ENCODE measurements at regions of chr17 and their contacts with region 1.

Region 1: GRCh38 chr17:18855831-18856569 is 1.9 kb upstream of the PRPSAP2 start:
- DNase-seq: peak; percentile 74 to 94 (median 82)
- ATAC-seq: peak; percentile 88
- H3K4me3 ChIP-seq: peak overlapping the region; percentile 80
- H3K4me3 Mint-ChIP-seq: peak overlapping the region; percentile 95
- H3K27ac ChIP-seq: peak overlapping the region; percentile 41 to 53
- H3K27ac Mint-ChIP-seq: peak overlapping the region; percentile 89
- H3K4me1 ChIP-seq: peaks cover 52% of the 10 kb centered on the region
- H3K4me1 Mint-ChIP-seq: peaks cover 49% of the 10 kb centered on the region
- H3K27me3 ChIP-seq: no peaks in the 10 kb centered on the region
- H3K27me3 Mint-ChIP-seq: no peaks in the 10 kb centered on the region
- CTCF ChIP-seq: no peak

Region 2: DNA sequence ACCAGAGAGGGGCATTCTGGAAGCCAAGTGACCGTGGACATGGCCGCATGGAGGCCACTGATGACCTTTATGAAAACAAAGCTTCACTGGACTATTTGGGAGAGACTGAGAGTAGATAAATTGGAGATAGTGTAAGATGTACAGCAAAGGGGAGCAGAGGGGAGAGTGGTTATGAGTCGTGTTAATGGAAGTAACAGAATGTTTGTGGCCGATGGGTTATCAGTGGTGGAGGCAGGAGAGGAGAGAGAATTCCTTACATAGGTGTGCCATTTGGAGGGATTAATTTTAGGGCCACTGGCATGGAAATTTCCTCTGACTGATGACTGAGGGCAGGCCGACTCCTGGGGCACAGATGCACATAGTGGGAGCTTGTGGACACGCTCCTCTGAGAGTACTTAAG is 21.1 kb after region 1 on chr17:
- CTCF ChIA-PET with region 1: no interaction called
- POLR2A ChIA-PET with region 1: no interaction called
- intact Hi-C with region 1: no loop called
- DNase-seq: no peak
- ATAC-seq: no peak
- H3K4me3 ChIP-seq: no peak overlapping the region
- H3K4me3 Mint-ChIP-seq: no peak overlapping the region
- H3K27ac ChIP-seq: no peak overlapping the region
- H3K27ac Mint-ChIP-seq: peak overlapping the region; percentile 40
- H3K4me1 ChIP-seq: no peaks in the 10 kb centered on the region
- H3K4me1 Mint-ChIP-seq: peaks cover 11% of the 10 kb centered on the region
- H3K27me3 ChIP-seq: no peaks in the 10 kb centered on the region
- H3K27me3 Mint-ChIP-seq: no peaks in the 10 kb centered on the region
- CTCF ChIP-seq: no peak

Region 3: DNA sequence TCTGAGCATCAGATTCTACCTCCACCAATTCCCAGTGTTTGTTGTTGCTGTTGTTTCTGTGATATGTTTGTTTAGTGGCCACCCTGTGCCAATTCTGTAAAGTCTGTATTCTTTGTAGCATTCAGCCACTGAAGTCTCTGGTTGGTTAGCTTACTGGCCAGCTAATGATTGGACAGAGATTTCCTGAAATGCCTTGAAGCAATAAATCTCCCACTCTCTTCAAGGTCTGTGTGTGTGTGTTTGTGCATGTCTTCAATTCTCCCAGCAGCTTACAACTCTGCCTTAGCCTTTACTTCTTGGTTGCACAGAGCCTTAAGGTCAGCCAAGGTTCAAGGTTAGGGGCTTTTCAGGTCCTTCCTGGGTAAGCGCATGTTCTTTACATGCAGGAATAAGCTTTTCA is 40.1 kb after region 1 on chr17:
- CTCF ChIA-PET with region 1: interaction called, 3 read pairs
- POLR2A ChIA-PET with region 1: interaction called, 5 read pairs
- intact Hi-C with region 1: loop called (anchors 2 to 5 kb)
- DNase-seq: no peak
- ATAC-seq: no peak
- H3K4me3 ChIP-seq: no peak overlapping the region
- H3K4me3 Mint-ChIP-seq: no peak overlapping the region
- H3K27ac ChIP-seq: no peak overlapping the region
- H3K27ac Mint-ChIP-seq: no peak overlapping the region
- H3K4me1 ChIP-seq: peaks cover 25% of the 10 kb centered on the region
- H3K4me1 Mint-ChIP-seq: peaks cover 33% of the 10 kb centered on the region
- H3K27me3 ChIP-seq: no peaks in the 10 kb centered on the region
- H3K27me3 Mint-ChIP-seq: no peaks in the 10 kb centered on the region
- CTCF ChIP-seq: no peak

Region 4: GRCh38 chr17:18951941-18952842 is 96.2 kb after region 1 on chr17 and contains the start of gene SLC5A10:
- CTCF ChIA-PET with region 1: no interaction called
- POLR2A ChIA-PET with region 1: interaction called, 17 read pairs
- intact Hi-C with region 1: no loop called
- DNase-seq: no peak
- ATAC-seq: no peak
- H3K4me3 ChIP-seq: no peak within 1 kb of the TSS
- H3K4me3 Mint-ChIP-seq: no peak within 1 kb of the TSS
- H3K27ac ChIP-seq: no peak within 1 kb of the TSS
- H3K27ac Mint-ChIP-seq: no peak within 1 kb of the TSS
- H3K4me1 ChIP-seq: peaks cover 50% of the 10 kb centered on the region
- H3K4me1 Mint-ChIP-seq: peaks cover 34% of the 10 kb centered on the region
- H3K27me3 ChIP-seq: no peaks in the 10 kb centered on the region
- H3K27me3 Mint-ChIP-seq: no peaks in the 10 kb centered on the region
- CTCF ChIP-seq: no peak
- total RNA-seq, gene SLC5A10: not detected

Region 5: DNA sequence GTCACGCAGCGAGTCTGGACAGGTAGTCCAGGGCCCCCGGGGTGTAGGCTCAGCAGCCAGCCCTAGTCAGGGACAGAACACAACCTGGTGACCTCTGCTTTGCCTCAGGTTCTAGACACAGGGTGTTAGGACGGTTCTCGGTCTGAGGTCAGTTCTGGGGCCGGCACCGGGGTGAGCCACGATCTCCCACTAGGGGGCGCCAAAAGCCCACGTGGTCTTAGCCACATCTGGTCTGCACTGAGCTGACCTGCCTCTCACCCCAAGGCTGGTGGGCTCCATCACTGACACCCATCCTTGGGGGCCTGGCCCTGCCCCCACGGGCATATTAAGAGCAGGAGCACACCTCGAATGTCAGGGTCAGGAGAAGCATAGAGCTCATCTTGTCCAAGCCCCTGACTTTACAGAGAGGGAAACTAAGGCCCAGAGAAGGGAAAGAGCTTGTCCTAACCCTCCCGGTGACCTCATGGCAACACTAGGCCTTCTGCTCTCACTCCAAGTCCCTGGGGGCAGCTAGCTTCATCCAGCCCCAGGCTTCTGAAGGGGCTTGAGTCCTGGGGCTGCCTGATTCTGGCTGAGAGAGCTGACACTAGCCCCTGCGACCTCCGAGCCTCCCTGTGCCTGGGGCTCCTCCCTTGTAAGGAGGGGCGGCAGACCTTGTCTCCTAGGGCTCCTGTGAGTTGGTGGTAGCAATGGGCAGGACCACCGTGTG is 105.0 kb after region 1 on chr17:
- CTCF ChIA-PET with region 1: interaction called, 3 read pairs
- POLR2A ChIA-PET with region 1: interaction called, 17 read pairs
- intact Hi-C with region 1: no loop called
- DNase-seq: peak; percentile 39 to 89 (median 70)
- ATAC-seq: peak; percentile 73
- H3K4me3 ChIP-seq: no peak overlapping the region
- H3K4me3 Mint-ChIP-seq: no peak overlapping the region
- H3K27ac ChIP-seq: no peak overlapping the region
- H3K27ac Mint-ChIP-seq: no peak overlapping the region
- H3K4me1 ChIP-seq: peaks cover 29% of the 10 kb centered on the region
- H3K4me1 Mint-ChIP-seq: peaks cover 23% of the 10 kb centered on the region
- H3K27me3 ChIP-seq: no peaks in the 10 kb centered on the region
- H3K27me3 Mint-ChIP-seq: no peaks in the 10 kb centered on the region
- CTCF ChIP-seq: peak; percentile 98